H1 (cell line): ENCODE measurements at regions of chr3 and their contacts with region 1.

Region 1: DNA sequence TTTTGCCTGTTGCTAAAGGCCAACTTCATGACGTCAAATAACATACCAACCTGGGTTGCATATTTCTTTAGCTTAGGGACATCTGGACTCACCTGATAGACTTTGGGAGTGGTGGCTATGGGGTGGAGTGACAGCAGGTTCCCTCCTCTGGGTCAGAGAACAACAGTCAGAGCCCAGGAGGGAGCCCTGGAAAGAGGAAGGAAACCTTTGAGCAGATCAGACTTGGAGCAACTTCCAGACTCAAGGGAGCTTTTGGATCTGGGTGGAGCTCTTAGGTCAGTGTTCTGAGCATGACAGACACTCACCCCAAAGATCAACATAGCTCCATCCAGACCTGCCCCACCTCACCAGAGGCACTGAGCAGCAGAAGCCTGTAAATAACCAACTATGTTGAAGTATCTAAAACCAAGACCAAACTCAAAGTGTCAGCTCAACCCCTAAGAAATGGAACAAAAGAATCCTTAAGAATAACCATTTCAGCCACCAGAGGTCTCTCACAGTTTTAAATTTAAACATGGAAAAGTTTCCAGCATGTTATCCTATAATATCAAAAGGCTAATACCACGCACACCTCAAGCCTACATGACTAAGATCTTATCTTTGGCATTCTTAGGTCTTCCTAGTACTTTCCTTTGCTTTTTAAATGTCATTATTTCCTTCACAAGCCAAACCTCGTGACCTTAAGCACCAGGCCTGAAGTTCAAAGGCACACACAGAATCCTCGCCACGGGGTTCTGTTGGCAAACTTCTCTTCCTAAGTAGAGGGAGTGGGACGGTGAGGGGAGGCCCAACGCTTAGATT is 56.4 kb downstream of the UMPS start:
- DNase-seq: no peak
- H3K4me3 ChIP-seq: no peak overlapping the region
- H3K27ac ChIP-seq: 0 out of 2 replicates have a peak overlapping the region, but pooled peaks have one; percentile 4
- H3K4me1 ChIP-seq: peaks cover 0 to 1% (median 0%) of the 10 kb centered on the region in 4 experiments; a peak in 1 of 7 replicates
- H3K27me3 ChIP-seq: no peaks in the 10 kb centered on the region
- CTCF ChIP-seq: no peak; a peak in 1 of 4 replicates
- EP300 ChIP-seq: no peak
- POLR2A ChIP-seq: no peak
- RAD21 ChIP-seq: peak; percentile 26 to 29; a peak in 3 of 4 replicates

Region 2: DNA sequence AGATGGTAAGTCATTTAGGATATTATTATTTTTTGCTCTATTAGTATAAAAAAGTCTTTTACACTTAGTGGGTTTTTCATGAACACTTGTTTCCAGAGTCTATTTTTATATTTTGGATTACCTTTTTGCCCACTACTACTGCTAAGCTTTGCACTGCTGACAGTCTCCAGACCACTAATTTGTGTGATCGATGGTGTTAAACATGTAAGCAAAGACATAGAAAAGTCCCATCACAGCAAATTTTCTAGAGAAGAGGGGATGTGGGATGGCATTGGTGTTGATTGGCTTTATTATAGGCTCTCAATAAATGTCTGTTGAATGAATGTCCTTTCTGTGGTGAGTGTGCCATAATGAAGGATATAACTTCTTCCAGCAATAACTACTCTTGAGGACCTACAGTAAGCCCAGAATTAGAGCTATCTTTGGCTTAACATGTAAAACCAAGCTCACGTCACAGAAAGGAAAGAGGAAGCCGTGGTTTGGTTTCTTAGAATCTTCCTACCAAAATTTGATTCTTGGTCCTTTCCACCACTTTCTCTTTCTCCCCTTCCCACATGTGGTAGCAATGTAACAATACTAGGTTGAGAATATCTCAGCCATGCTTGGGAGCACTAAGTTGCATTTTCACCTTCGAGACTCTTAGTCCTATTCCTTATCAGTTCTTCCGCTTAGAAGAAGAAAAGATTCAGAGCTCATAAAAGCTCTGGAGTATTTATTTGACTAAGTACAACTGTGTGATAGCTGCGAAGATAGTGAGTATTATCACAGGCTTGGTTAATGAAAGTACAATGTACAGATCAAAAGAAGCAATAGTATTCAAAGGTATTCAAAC is 147.0 kb before region 1 on chr3:
- CTCF ChIA-PET with region 1: no interaction called
- POLR2A ChIA-PET with region 1: no interaction called
- DNase-seq: no peak
- H3K4me3 ChIP-seq: no peak overlapping the region
- H3K27ac ChIP-seq: no peak overlapping the region
- H3K4me1 ChIP-seq: peaks cover 4 to 17% (median 10%) of the 10 kb centered on the region in 4 experiments; a peak in 6 of 7 replicates
- H3K27me3 ChIP-seq: no peaks in the 10 kb centered on the region
- CTCF ChIP-seq: no peak
- EP300 ChIP-seq: no peak
- POLR2A ChIP-seq: no peak
- RAD21 ChIP-seq: no peak

Region 3: DNA sequence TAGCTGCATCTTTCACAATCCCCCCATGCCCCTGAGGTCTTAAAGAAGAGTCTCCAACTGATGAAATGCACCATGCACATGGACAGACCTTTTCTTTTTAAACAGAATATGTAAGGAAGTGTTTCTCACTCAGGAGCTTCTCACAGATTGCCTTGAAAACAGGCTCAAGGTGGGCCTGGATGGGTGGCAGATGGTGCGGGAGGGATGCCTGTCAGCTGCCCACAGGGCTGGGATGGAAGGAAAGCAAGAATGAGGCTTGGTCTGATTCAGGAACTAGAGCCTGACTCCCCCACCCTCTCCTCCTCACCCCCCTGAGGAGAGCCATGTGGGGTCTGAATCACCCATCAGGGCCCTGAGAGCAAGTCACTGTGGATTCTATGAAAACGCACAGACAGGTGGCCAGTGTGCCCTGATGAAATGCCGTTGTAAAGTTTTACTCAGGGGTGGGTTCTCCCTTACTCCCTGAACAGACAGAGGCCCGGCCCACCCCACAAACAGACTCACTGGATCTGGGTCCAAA is 10.8 kb after region 1 on chr3:
- CTCF ChIA-PET with region 1: interaction called, 13 read pairs
- POLR2A ChIA-PET with region 1: interaction called, 8 read pairs
- DNase-seq: no peak
- H3K4me3 ChIP-seq: no peak overlapping the region
- H3K27ac ChIP-seq: no peak overlapping the region
- H3K4me1 ChIP-seq: peaks cover 2 to 13% (median 4%) of the 10 kb centered on the region in 4 experiments; a peak in 6 of 7 replicates
- H3K27me3 ChIP-seq: no peaks in the 10 kb centered on the region
- CTCF ChIP-seq: no peak
- EP300 ChIP-seq: no peak
- POLR2A ChIP-seq: no peak
- RAD21 ChIP-seq: no peak

Region 4: GRCh38 chr3:124818398-124819091 is 31.9 kb after region 1 on chr3:
- CTCF ChIA-PET with region 1: interaction called, 17 read pairs
- POLR2A ChIA-PET with region 1: no interaction called
- DNase-seq: no peak
- H3K4me3 ChIP-seq: no peak overlapping the region
- H3K27ac ChIP-seq: no peak overlapping the region
- H3K4me1 ChIP-seq: no peaks in the 10 kb centered on the region
- H3K27me3 ChIP-seq: no peaks in the 10 kb centered on the region; a peak in 1 of 7 replicates
- CTCF ChIP-seq: no peak
- EP300 ChIP-seq: no peak
- POLR2A ChIP-seq: no peak
- RAD21 ChIP-seq: no peak

Region 5: DNA sequence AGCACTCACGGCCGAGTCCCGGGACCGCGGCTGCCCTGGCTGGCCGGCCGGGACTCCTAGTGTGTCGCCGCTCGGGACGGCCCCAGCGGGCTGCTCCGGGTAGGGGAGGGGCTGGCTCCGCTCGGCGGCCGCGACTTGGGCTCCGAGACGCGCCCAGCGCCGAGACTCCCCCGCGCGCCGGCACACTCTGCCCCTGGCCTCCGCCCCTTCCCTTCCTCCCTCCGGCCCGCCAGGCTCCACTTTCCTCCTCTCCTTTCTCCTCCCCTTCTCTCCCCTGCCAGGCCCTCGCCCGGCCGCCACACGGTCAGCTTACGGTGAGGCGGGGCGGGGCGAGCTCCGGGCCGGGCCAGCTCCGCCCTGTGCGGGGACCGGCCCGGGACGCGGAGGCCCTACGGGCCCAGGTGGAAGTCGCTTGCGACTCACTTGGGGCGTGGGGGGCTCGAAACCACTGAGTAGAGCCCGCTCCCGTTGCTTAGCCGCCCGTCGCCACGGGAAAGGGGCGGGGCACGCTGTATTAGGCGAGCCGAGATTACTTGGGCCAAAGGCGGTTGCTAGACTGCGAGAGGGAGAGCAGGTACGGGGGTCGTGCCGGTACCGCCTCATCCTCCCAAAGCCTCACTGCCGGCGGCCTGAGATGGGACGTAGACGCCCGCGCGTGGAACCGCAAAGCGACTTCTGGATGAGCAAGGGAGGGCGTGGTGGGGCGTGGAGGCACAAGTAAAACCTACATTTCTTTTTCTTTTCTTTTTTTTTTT is 100.7 kb after region 1 on chr3 and contains the start of gene ITGB5:
- CTCF ChIA-PET with region 1: interaction called, 21 read pairs
- POLR2A ChIA-PET with region 1: no interaction called
- DNase-seq: peak in 1 of 2 experiments; percentile 87
- H3K4me3 ChIP-seq: peak within 1 kb of the TSS; percentile 54 to 88 (median 68)
- H3K27ac ChIP-seq: peak within 1 kb of the TSS; percentile 52; the same call in 1 of the 2 replicates
- H3K4me1 ChIP-seq: peaks cover 7 to 40% (median 30%) of the 10 kb centered on the region in 4 experiments
- H3K27me3 ChIP-seq: no peaks in the 10 kb centered on the region
- CTCF ChIP-seq: no peak
- EP300 ChIP-seq: no peak
- POLR2A ChIP-seq: peak in 1 of 2 experiments; percentile 70; a peak in 2 of 3 replicates
- RAD21 ChIP-seq: 0 out of 4 replicates have a peak, but pooled peaks of 1 of the 2 experiments have one; percentile 0
- total RNA-seq, gene ITGB5: 251 and 268 TPM in 2 replicates

Region 6: GRCh38 chr3:124905849-124906248 is 119.2 kb after region 1 on chr3:
- CTCF ChIA-PET with region 1: interaction called, 30 read pairs
- POLR2A ChIA-PET with region 1: no interaction called
- DNase-seq: no peak
- H3K4me3 ChIP-seq: no peak overlapping the region
- H3K27ac ChIP-seq: no peak overlapping the region
- H3K4me1 ChIP-seq: no peaks in the 10 kb centered on the region; a peak in 1 of 7 replicates
- H3K27me3 ChIP-seq: no peaks in the 10 kb centered on the region
- CTCF ChIP-seq: no peak
- EP300 ChIP-seq: no peak
- POLR2A ChIP-seq: no peak
- RAD21 ChIP-seq: no peak